Panc1 (cell line): ENCODE measurements at regions of chr1 and their contacts with region 1.

Region 1: GRCh38 chr1:56578963-56579875 is at the start of gene PLPP3:
- DNase-seq: peak; percentile 59
- ATAC-seq: peak; percentile 95
- H3K4me3 ChIP-seq: peak within 1 kb of the TSS; percentile 66 to 78
- H3K27ac ChIP-seq: peak within 1 kb of the TSS; percentile 64
- H3K4me1 ChIP-seq: peaks cover 23% of the 10 kb centered on the region
- H3K27me3 ChIP-seq: 0 out of 2 replicates have a peak, but pooled peaks cover 2% of the 10 kb centered on the region
- CTCF ChIP-seq: peak; percentile 63
- total RNA-seq, gene PLPP3: 8.2 TPM

Region 2: GRCh38 chr1:55478742-55479141 is 1100.5 kb before region 1 on chr1:
- CTCF ChIA-PET with region 1: no interaction called
- POLR2A ChIA-PET with region 1: no interaction called
- in situ Hi-C with region 1: no loop called
- intact Hi-C with region 1: loop called (anchors 10 kb)
- DNase-seq: no peak
- ATAC-seq: peak; percentile 51; the same call in 1 of the 2 replicates
- H3K4me3 ChIP-seq: no peak overlapping the region
- H3K27ac ChIP-seq: no peak overlapping the region
- H3K4me1 ChIP-seq: no peaks in the 10 kb centered on the region
- H3K27me3 ChIP-seq: no peaks in the 10 kb centered on the region
- CTCF ChIP-seq: peak; percentile 44; the same call in 1 of the 2 replicates

Region 3: GRCh38 chr1:56411484-56412180 is 167.6 kb before region 1 on chr1:
- CTCF ChIA-PET with region 1: no interaction called
- POLR2A ChIA-PET with region 1: no interaction called
- in situ Hi-C with region 1: no loop called
- intact Hi-C with region 1: loop called (anchors 10 kb)
- DNase-seq: no peak
- ATAC-seq: no peak
- H3K4me3 ChIP-seq: no peak overlapping the region
- H3K27ac ChIP-seq: no peak overlapping the region
- H3K4me1 ChIP-seq: no peaks in the 10 kb centered on the region
- H3K27me3 ChIP-seq: no peaks in the 10 kb centered on the region; the same call in 1 of the 2 replicates
- CTCF ChIP-seq: no peak

Region 4: GRCh38 chr1:56557746-56558145 is 21.5 kb before region 1 on chr1:
- CTCF ChIA-PET with region 1: no interaction called
- POLR2A ChIA-PET with region 1: no interaction called
- in situ Hi-C with region 1: no loop called
- intact Hi-C with region 1: no loop called
- DNase-seq: no peak
- ATAC-seq: no peak
- H3K4me3 ChIP-seq: no peak overlapping the region
- H3K27ac ChIP-seq: no peak overlapping the region
- H3K4me1 ChIP-seq: no peaks in the 10 kb centered on the region; the same call in 1 of the 2 replicates
- H3K27me3 ChIP-seq: no peaks in the 10 kb centered on the region
- CTCF ChIP-seq: no peak